ENCODE measurements at regions of chr20 and their contacts with region 1.

Region 1: DNA sequence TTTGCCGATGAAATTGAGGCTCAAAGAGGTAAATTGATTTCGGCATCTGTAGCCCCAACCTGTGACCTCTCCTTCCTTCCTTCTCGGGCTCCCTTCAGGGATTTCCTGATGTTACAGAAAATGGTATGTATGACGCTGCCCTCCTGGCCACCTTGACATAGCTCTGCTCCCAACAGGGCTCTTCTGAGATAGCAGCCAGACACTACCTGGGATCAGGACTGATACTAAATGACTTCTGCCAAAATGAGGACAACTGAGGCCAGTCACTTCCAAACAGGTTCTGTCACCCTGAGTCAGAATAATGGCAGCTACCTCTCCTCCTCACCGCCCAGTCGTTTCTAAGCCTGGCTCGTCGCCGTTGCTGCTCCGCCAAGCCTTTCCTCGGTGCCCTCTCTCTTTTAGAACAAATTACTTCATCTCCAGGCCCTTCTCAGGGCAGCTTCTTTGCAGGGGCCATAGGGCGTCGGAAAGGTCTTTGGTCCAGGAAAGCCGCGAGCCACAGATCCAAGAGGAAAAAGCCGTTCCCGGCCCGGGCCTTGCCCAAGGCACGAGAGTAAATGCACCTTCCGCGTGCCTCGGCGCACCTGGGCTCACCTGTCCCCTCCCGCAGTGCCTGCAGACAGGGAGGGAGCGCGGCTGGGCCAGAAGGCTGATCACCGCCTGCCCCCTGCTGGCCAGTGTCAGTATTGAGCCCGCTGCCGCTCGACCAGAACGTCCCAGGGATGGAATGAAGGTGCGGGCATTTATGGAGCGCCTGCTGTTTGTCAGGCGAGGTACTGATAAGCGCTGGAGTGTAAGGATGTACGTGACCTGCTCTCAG is 904 bp upstream of the LPIN3 start:
- DNase-seq: peak; percentile 88
- ATAC-seq: peak; percentile 91
- H3K4me3 Mint-ChIP-seq: peak overlapping the region; percentile 72
- H3K27ac Mint-ChIP-seq: peak overlapping the region; percentile 33
- H3K4me1 Mint-ChIP-seq: peaks cover 7% of the 10 kb centered on the region
- H3K27me3 Mint-ChIP-seq: peaks cover 6% of the 10 kb centered on the region
- CTCF ChIP-seq: peak; percentile 100

Region 2: DNA sequence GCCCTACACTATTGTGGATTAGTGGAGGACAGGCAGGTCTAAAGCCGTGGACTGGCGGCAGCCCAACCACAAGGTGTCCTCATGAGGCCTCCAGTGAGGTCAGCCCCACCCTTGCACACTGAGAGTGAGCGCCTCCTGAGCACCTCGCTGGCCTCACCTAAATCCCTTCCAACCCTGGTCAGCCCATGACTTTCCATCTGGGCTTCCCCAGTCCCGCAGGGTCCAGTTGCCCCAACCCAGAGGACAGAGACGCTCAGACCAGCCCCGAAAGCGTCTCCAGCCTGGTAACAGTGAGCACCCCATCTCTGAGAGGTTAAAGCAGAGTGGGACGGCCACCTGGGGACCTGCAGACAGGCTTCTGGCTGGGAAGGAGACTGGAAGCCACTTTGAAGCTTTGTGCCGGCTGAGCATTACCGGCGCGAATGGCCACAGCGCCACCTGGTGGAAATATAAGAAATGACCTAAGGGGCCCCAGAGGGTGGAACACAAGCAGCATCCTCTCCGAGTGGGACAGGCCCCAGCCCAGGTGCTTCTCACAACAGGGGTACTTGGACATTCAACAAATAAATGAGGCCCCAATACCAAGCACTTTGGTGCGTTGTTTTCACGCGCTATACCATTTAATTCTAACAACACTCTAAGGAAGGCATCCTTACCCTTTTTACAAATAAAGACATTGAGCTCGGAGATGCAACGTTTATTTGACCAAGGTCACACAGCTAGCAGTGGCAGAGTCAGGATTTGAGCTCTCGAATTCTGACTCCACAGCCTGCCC is 376.8 kb before region 1 on chr20:
- CTCF ChIA-PET with region 1: no interaction called
- POLR2A ChIA-PET with region 1: no interaction called
- intact Hi-C with region 1: loop called (anchors 10 kb)
- DNase-seq: peak; percentile 78
- ATAC-seq: peak; percentile 89
- H3K4me3 Mint-ChIP-seq: no peak overlapping the region
- H3K27ac Mint-ChIP-seq: no peak overlapping the region
- H3K4me1 Mint-ChIP-seq: peaks cover 8% of the 10 kb centered on the region
- H3K27me3 Mint-ChIP-seq: no peaks in the 10 kb centered on the region
- CTCF ChIP-seq: peak; percentile 96

Region 3: DNA sequence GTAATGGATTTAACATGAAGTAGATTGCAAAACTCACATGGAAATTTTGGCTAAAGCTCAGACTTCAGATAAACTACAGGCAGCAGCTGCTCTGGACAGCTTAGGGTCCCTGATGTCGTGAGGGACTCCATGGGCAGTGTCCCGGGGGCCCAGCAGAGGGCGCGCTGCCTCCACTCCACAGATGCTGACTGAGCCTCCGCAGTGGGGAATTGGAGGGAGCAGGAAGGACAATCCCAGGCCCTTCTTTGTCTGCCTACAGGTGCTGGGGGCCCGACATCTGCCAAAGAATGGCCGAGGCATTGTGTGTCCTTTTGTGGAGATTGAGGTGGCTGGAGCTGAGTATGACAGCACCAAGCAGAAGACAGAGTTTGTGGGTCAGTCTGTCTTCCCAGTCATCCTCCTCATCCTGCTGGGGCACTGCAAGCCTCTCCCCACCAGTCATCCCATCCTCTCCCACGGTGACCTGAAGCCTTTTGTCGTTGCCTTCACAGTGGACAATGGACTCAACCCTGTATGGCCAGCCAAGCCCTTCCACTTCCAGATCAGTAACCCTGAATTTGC is 166.5 kb before region 1 on chr20:
- CTCF ChIA-PET with region 1: interaction called, 24 read pairs
- POLR2A ChIA-PET with region 1: no interaction called
- intact Hi-C with region 1: no loop called
- DNase-seq: peak; percentile 75
- ATAC-seq: peak; percentile 74
- H3K4me3 Mint-ChIP-seq: no peak overlapping the region
- H3K27ac Mint-ChIP-seq: peak overlapping the region; percentile 56
- H3K4me1 Mint-ChIP-seq: peaks cover 25% of the 10 kb centered on the region
- H3K27me3 Mint-ChIP-seq: no peaks in the 10 kb centered on the region
- CTCF ChIP-seq: peak; percentile 83

Region 4: DNA sequence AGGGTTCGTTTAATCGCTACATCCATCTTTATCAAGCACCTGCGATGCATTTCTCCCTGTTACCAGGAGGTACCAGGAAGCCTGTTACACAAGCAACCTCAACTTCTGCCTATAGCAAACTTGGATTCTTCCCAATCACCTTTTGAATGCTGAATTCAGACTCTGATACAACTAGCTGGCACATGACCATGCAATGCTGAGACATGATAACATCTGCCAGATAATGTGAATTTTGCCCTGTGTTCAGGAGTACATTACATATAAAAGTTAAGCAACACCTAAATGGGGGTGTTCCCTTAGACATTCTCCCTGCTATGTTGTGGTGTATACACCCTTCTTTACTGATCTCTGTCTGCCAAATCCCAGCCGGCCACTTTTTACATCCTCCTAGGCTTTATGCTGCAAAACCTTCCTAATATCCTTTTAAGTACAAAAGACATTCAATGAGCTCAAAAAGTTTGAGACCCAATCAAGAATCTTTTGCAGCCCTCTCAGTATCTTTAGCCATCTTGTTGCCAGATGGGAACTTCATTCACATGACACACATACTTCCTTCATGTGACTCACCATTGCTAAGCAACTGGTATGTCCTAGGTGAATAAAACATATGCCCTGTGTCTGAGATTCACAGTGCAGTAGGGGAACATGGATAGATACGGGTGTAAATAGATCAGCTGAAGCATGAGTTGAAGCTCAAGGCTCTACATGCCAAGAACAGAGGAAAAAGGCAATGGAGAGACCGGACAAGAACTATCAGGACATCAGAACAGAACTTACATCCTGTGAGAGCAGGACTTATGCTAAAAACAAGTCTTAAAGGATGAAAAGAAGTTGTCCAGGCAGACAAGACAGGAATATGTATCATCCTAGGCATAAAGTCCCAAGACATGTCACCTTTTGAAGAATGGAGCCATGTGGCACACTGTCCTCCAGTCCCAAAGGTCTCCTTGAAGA is 106.5 kb before region 1 on chr20:
- CTCF ChIA-PET with region 1: interaction called, 10 read pairs
- POLR2A ChIA-PET with region 1: no interaction called
- intact Hi-C with region 1: loop called (anchors 10 kb)
- DNase-seq: no peak
- ATAC-seq: no peak
- H3K4me3 Mint-ChIP-seq: no peak overlapping the region
- H3K27ac Mint-ChIP-seq: peak overlapping the region; percentile 13
- H3K4me1 Mint-ChIP-seq: peaks cover 42% of the 10 kb centered on the region
- H3K27me3 Mint-ChIP-seq: no peaks in the 10 kb centered on the region
- CTCF ChIP-seq: no peak

Region 5: DNA sequence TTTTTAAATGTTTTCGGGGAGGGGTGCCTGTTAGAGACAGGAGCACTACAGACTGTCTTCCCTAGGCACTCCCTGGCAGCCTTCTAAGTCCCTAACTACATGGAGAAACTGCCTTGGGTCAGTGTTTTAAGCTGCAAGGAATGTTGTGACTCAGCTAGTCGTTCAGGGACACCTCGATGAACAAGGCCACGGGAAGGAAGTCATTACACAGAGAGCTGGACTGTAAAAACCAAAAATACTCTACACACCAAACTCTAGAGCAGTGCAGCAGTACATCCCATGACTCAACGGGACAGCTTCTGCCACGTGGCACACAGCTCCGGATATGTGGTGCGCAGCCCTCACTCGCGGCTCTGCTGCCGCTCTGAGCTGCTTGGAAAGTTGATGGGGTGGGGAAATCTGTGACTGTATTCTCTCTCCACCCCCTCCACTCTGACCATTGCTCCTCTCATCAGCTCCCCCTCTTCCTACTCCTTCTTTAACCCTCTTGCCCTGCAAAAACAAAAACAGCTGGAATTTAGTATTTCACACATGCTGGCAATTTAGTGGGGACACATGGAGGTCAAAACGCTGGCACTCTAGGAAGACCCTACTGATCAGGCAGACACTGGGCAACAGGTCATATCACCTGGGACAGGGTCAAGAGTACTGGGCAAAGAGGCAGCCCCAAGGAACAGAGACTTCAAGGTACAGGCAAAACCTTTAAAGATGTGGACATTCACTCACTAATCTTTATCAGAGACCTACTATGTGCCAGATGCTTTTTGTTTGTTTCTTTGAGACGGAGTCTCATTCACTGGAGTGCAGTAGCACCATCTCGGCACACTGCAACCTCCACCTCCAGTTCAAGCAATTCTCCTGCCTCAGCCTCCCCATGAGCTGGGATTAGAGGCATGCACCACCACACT is 10.0 kb before region 1 on chr20:
- CTCF ChIA-PET with region 1: interaction called, 29 read pairs
- POLR2A ChIA-PET with region 1: interaction called, 3 read pairs
- intact Hi-C with region 1: no loop called
- DNase-seq: peak; percentile 80
- ATAC-seq: peak; percentile 99
- H3K4me3 Mint-ChIP-seq: no peak overlapping the region
- H3K27ac Mint-ChIP-seq: peak overlapping the region; percentile 53
- H3K4me1 Mint-ChIP-seq: peaks cover 14% of the 10 kb centered on the region
- H3K27me3 Mint-ChIP-seq: no peaks in the 10 kb centered on the region
- CTCF ChIP-seq: no peak

Region 6: GRCh38 chr20:41411391-41411847 is 71.7 kb after region 1 on chr20:
- CTCF ChIA-PET with region 1: interaction called, 4 read pairs
- POLR2A ChIA-PET with region 1: no interaction called
- intact Hi-C with region 1: loop called (anchors 5 kb)
- DNase-seq: no peak
- ATAC-seq: no peak
- H3K4me3 Mint-ChIP-seq: no peak overlapping the region
- H3K27ac Mint-ChIP-seq: no peak overlapping the region
- H3K4me1 Mint-ChIP-seq: peaks cover 13% of the 10 kb centered on the region
- H3K27me3 Mint-ChIP-seq: no peaks in the 10 kb centered on the region
- CTCF ChIP-seq: peak; percentile 47